Activated B cell treated with CpG ODN at 0.5 μM for 24 hours (primary cell): ENCODE measurements at regions of chr17 and their contacts with region 1.

Region 1: DNA sequence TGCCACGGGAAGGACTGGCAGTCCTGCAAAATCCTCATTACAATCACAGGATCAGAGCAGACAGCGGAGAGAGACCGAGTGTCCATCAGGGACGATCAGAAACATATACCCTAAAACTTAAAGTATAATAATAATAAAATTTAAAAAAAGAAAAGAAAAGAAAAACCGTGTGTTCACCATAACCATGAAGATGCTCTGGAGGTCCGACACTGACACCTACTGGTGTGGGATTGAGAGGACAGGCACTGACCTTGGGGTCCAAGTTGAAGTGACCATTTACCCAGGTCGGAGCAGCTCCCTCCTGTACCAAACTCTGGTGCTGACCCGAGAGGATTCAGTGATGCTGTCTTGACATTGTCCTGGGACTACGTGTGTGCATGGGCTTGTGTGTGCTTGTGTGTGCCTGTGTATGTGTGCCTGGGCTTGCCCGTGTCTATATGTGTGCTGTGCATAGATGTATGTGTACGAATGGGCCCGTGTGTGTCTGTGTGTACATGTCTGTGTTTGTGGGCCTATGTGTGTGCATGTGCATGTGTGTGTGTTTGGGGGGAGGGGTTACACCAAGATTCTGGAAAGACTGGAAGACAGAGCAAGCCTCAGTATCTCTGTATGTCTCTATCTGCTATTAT is 10.0 kb upstream of the CD300LD start:
- DNase-seq: no peak
- ATAC-seq: no peak
- H3K4me3 Mint-ChIP-seq: no peak overlapping the region
- H3K27ac Mint-ChIP-seq: no peak overlapping the region
- H3K4me1 Mint-ChIP-seq: peaks cover 53% of the 10 kb centered on the region
- H3K27me3 Mint-ChIP-seq: peaks cover 6% of the 10 kb centered on the region
- CTCF ChIP-seq: no peak

Region 2: DNA sequence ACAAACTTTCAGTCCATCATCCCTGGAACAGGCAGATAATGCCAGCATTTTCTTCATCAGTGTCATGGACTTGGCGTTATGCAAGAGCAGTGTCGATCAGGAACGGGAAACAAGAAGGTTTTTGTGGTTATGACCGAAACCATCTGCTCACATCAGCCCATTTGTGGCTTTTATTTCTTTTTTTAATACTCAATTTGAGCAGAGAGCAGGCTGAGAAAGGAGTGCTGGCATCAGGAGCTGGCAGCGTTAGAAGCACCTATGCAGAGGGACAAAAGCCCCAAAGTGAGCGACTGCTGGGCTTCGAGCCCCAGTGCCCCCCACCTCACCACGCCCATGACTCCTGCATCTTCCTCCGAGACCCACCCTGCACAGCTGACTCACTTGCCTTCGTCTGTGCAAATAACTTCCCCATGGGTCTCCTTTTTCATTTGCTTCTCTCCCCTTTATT is 37.7 kb after region 1 on chr17:
- CTCF ChIA-PET with region 1: interaction called, 3 read pairs
- POLR2A ChIA-PET with region 1: interaction called, 14 read pairs
- intact Hi-C with region 1: loop called (anchors 2 kb)
- DNase-seq: peak; percentile 37
- ATAC-seq: peak; percentile 69
- H3K4me3 Mint-ChIP-seq: peak overlapping the region; percentile 42
- H3K27ac Mint-ChIP-seq: peak overlapping the region; percentile 78
- H3K4me1 Mint-ChIP-seq: peaks cover 85% of the 10 kb centered on the region
- H3K27me3 Mint-ChIP-seq: peaks cover 4% of the 10 kb centered on the region
- CTCF ChIP-seq: no peak